K562 (cell line): ENCODE measurements at regions of chr7 and their contacts with region 1.

Region 1: GRCh38 chr7:22488643-22489462 is 11.1 kb downstream of the STEAP1B start:
- DNase-seq: peak; percentile 63 to 81 (median 66)
- ATAC-seq: peak; percentile 93
- H3K4me3 ChIP-seq: no peak overlapping the region
- H3K27ac ChIP-seq: no peak overlapping the region
- H3K4me1 ChIP-seq: no peaks in the 10 kb centered on the region
- H3K27me3 ChIP-seq: no peaks in the 10 kb centered on the region
- CTCF ChIP-seq: peak; percentile 84 to 93 (median 84)
- EP300 ChIP-seq: 0 out of 2 replicates have a peak, but pooled peaks have one; percentile 4
- POLR2A ChIP-seq: no peak
- RAD21 ChIP-seq: peak; percentile 95 to 97

Region 2: GRCh38 chr7:22295402-22296264 is 193.2 kb before region 1 on chr7:
- CTCF ChIA-PET with region 1: interaction called, 18 read pairs
- POLR2A ChIA-PET with region 1: no interaction called
- in situ Hi-C with region 1: no loop called
- intact Hi-C with region 1: loop called (anchors 1 kb)
- DNase-seq: no peak
- ATAC-seq: no peak
- H3K4me3 ChIP-seq: no peak overlapping the region
- H3K27ac ChIP-seq: no peak overlapping the region
- H3K4me1 ChIP-seq: no peaks in the 10 kb centered on the region
- H3K27me3 ChIP-seq: peaks cover 4 to 7% of the 10 kb centered on the region in 2 experiments; a peak in 3 of 5 replicates
- CTCF ChIP-seq: peak in 2 of 3 experiments; percentile 15 to 51; a peak in 2 of 6 replicates
- EP300 ChIP-seq: no peak
- POLR2A ChIP-seq: no peak
- RAD21 ChIP-seq: peak; percentile 47 to 68; a peak in 3 of 4 replicates

Region 3: GRCh38 chr7:22697876-22698606 is 209.2 kb after region 1 on chr7:
- CTCF ChIA-PET with region 1: no interaction called
- POLR2A ChIA-PET with region 1: no interaction called
- in situ Hi-C with region 1: no loop called
- intact Hi-C with region 1: no loop called
- DNase-seq: no peak
- ATAC-seq: no peak
- H3K4me3 ChIP-seq: no peak overlapping the region
- H3K27ac ChIP-seq: peak overlapping the region; percentile 21; the same call in 1 of the 3 replicates
- H3K4me1 ChIP-seq: peaks cover 19 to 68% of the 10 kb centered on the region in 2 experiments
- H3K27me3 ChIP-seq: no peaks in the 10 kb centered on the region
- CTCF ChIP-seq: no peak
- EP300 ChIP-seq: no peak
- POLR2A ChIP-seq: no peak
- RAD21 ChIP-seq: no peak